ENCODE measurements at regions of chr11 and their contacts with region 1.

Region 1: GRCh38 chr11:93718057-93718563 is 23.2 kb downstream of the TAF1D start:
- DNase-seq: no peak
- H3K4me3 ChIP-seq: no peak overlapping the region
- H3K27ac ChIP-seq: no peak overlapping the region
- H3K4me1 ChIP-seq: peaks cover 0 to 9% (median 5%) of the 10 kb centered on the region in 4 experiments; a peak in 5 of 7 replicates
- H3K27me3 ChIP-seq: no peaks in the 10 kb centered on the region
- CTCF ChIP-seq: no peak
- EP300 ChIP-seq: no peak
- POLR2A ChIP-seq: no peak
- RAD21 ChIP-seq: no peak

Region 2: GRCh38 chr11:93543292-93543977 is 174.7 kb before region 1 on chr11 and contains the start of gene SMCO4:
- CTCF ChIA-PET with region 1: no interaction called
- POLR2A ChIA-PET with region 1: no interaction called
- DNase-seq: peak; percentile 74 to 91
- H3K4me3 ChIP-seq: peak within 1 kb of the TSS; percentile 58 to 84 (median 70)
- H3K27ac ChIP-seq: peak within 1 kb of the TSS; percentile 5; the same call in 1 of the 2 replicates
- H3K4me1 ChIP-seq: peaks cover 3 to 15% (median 11%) of the 10 kb centered on the region in 4 experiments; a peak in 5 of 7 replicates
- H3K27me3 ChIP-seq: no peaks in the 10 kb centered on the region
- CTCF ChIP-seq: peak; percentile 71 to 91 (median 81)
- EP300 ChIP-seq: peak in 1 of 2 experiments; percentile 73; a peak in 1 of 3 replicates
- POLR2A ChIP-seq: peak in 1 of 2 experiments; percentile 34; a peak in 2 of 3 replicates
- RAD21 ChIP-seq: peak; percentile 85 to 90
- total RNA-seq, gene SMCO4: 53.9 and 57.0 TPM in 2 replicates

Region 3: GRCh38 chr11:93697611-93698010 is 20.5 kb before region 1 on chr11:
- CTCF ChIA-PET with region 1: no interaction called
- POLR2A ChIA-PET with region 1: no interaction called
- DNase-seq: no peak
- H3K4me3 ChIP-seq: no peak overlapping the region
- H3K27ac ChIP-seq: no peak overlapping the region
- H3K4me1 ChIP-seq: no peaks in the 10 kb centered on the region
- H3K27me3 ChIP-seq: no peaks in the 10 kb centered on the region
- CTCF ChIP-seq: no peak
- EP300 ChIP-seq: no peak
- POLR2A ChIP-seq: no peak
- RAD21 ChIP-seq: no peak

Region 4: GRCh38 chr11:93727985-93728791 is 10.1 kb after region 1 on chr11:
- CTCF ChIA-PET with region 1: interaction called, 3 read pairs
- POLR2A ChIA-PET with region 1: interaction called, 495 read pairs
- DNase-seq: no peak
- H3K4me3 ChIP-seq: no peak overlapping the region
- H3K27ac ChIP-seq: no peak overlapping the region
- H3K4me1 ChIP-seq: no peaks in the 10 kb centered on the region
- H3K27me3 ChIP-seq: no peaks in the 10 kb centered on the region
- CTCF ChIP-seq: no peak
- EP300 ChIP-seq: no peak
- POLR2A ChIP-seq: peak; percentile 38 to 68; a peak in 2 of 3 replicates
- RAD21 ChIP-seq: no peak

Measured in H1 (cell line).